Activated CD4-positive, alpha-beta memory T cell treated with anti-CD3 and anti-CD28 coated beads, Interleukin-2, amount 10 ng/mL, durations not matched to agents 7 days and 5 days (primary cell): ENCODE measurements at regions of chr6 and their contacts with region 1.

Region 1: GRCh38 chr6:391559-392440 is at the start of gene IRF4:
- DNase-seq: peak; percentile 76
- H3K4me3 Mint-ChIP-seq: peak within 1 kb of the TSS; percentile 98
- H3K27ac Mint-ChIP-seq: peak within 1 kb of the TSS; percentile 98
- H3K4me1 Mint-ChIP-seq: peaks cover 56% of the 10 kb centered on the region
- H3K27me3 Mint-ChIP-seq: no peaks in the 10 kb centered on the region
- total RNA-seq, gene IRF4: 171 to 178 TPM

Region 2: DNA sequence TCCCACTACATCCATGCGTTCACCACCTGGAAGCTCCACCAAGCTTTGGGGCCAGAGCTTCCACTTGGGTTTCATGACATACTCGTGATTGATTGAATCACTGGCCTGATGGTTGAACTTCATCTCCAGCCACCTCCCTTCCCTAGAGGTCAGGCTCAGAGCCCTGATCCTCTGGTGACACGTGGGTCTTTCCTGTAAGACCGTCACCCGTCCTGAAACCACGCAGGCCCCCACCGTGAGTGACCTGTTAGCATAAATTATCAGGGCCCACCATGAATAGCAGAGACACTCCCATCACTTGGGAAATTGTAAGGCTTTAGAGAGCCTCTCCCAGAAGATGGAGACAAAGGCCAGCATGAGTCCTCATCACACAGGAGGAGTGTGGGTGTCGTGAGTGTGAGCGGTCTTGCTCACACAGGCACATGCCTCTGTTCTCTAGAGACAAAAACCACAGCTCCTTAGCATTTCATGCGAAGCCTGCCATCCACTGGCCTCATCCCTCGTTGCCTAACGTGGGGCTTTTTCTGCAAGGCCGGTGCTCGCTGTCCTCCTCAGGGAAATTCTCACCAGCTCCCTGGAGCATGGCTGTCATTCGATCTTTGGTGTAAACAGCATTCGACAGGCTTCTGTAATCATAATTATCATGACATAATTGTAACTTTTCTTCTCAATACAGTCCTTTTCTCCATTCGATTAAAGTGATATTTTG is 164.6 kb before region 1 on chr6:
- CTCF ChIA-PET with region 1: interaction called, 3 read pairs
- POLR2A ChIA-PET with region 1: interaction called, 137 read pairs
- DNase-seq: no peak
- H3K4me3 Mint-ChIP-seq: no peak overlapping the region
- H3K27ac Mint-ChIP-seq: peak overlapping the region; percentile 91
- H3K4me1 Mint-ChIP-seq: peaks cover 77% of the 10 kb centered on the region
- H3K27me3 Mint-ChIP-seq: peaks cover 7% of the 10 kb centered on the region

Region 3: DNA sequence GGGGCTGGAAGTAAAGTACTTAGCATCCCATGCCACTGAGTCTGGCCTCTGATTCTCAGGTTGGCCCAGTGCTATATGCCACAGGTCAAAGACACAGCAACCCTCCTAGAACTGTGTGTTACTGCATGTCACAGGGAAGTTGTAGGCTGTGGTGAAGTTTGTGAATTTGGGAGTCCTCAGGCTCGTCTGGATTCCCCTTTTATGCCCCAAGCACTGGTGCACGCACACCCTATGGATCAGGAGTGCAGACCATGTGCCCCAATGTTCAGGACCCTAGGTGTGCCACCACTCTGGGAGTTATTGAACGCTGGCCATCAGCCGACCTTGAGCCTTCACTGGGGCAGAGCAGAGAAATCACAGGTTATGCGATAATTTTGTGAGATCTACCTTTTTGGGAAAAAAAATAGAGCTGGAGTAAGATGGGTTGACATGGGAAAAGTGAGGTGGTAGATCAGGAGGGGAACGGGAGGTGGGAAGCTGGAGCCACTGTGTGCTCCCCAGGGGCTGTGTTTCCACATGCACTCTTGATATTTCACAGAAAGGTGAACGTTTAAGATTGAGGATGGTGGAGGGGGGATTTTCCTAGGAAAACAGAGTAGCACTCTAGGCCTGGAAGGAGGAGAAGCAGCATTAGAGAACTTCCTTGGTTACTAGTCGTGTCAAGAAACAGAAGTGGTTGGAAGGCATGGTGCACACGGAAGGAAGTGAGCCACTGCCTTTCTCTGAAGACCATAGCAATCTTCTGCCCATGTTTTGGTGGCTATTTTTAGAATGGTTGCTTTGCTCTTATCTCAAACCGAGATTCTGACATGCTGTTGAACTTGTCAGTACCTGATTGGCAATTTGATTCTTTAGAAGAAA is 55.4 kb before region 1 on chr6:
- CTCF ChIA-PET with region 1: interaction called, 9 read pairs
- POLR2A ChIA-PET with region 1: interaction called, 21 read pairs
- DNase-seq: peak; percentile 29
- H3K4me3 Mint-ChIP-seq: no peak overlapping the region
- H3K27ac Mint-ChIP-seq: peak overlapping the region; percentile 71
- H3K4me1 Mint-ChIP-seq: peaks cover 55% of the 10 kb centered on the region
- H3K27me3 Mint-ChIP-seq: no peaks in the 10 kb centered on the region

Region 4: GRCh38 chr6:446418-447366 is 54.9 kb after region 1 on chr6:
- CTCF ChIA-PET with region 1: interaction called, 9 read pairs
- POLR2A ChIA-PET with region 1: interaction called, 110 read pairs
- DNase-seq: peak; percentile 92
- H3K4me3 Mint-ChIP-seq: peak overlapping the region; percentile 64
- H3K27ac Mint-ChIP-seq: peak overlapping the region; percentile 87
- H3K4me1 Mint-ChIP-seq: peaks cover 55% of the 10 kb centered on the region
- H3K27me3 Mint-ChIP-seq: peaks cover 12% of the 10 kb centered on the region

Region 5: DNA sequence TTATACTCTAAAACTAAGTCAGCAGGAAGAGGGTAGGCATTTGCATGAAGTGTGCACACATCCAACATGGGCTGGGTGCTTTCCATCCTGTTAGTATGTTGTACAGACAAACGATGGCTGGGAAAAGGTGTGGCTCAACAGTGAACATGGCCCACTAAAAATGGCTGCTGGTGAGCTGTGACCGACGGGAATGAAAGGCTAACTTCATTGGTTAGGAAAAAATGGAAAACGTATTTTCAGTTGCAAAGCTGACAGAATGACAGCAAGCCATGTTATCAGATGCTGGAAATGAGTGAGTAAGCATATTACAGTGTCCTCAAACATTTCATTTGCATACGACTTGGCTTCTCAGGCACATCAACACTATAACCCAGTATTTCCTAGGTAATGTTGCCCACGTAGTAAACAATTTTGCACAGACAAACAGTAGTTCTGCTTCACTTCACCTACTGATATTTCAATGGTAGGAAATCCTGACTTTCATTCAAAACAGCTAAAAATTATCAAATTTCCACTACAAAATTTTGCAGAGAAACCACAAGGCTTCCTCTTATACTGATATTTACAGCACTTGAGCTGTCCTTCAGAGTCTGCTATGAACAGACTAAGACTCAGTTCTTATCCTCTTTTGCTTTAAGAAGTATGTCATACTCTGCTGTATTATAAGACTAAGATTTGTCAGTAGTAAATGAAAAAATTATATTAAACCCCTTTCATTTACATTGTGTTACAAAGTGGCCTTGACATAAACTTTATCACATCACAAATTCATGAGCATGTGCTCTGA is 98.6 kb after region 1 on chr6:
- CTCF ChIA-PET with region 1: interaction called, 5 read pairs
- POLR2A ChIA-PET with region 1: interaction called, 74 read pairs
- DNase-seq: peak; percentile 42
- H3K4me3 Mint-ChIP-seq: peak overlapping the region; percentile 45
- H3K27ac Mint-ChIP-seq: peak overlapping the region; percentile 93
- H3K4me1 Mint-ChIP-seq: peaks cover 79% of the 10 kb centered on the region
- H3K27me3 Mint-ChIP-seq: no peaks in the 10 kb centered on the region

Region 6: GRCh38 chr6:582370-582769 is 190.6 kb after region 1 on chr6:
- CTCF ChIA-PET with region 1: no interaction called
- POLR2A ChIA-PET with region 1: interaction called, 14 read pairs
- DNase-seq: no peak
- H3K4me3 Mint-ChIP-seq: peak overlapping the region; percentile 48
- H3K27ac Mint-ChIP-seq: peak overlapping the region; percentile 47
- H3K4me1 Mint-ChIP-seq: peaks cover 45% of the 10 kb centered on the region
- H3K27me3 Mint-ChIP-seq: no peaks in the 10 kb centered on the region

Region 7: GRCh38 chr6:854406-855118 is 462.8 kb after region 1 on chr6:
- CTCF ChIA-PET with region 1: no interaction called
- POLR2A ChIA-PET with region 1: no interaction called
- DNase-seq: no peak
- H3K4me3 Mint-ChIP-seq: no peak overlapping the region
- H3K27ac Mint-ChIP-seq: no peak overlapping the region
- H3K4me1 Mint-ChIP-seq: no peaks in the 10 kb centered on the region
- H3K27me3 Mint-ChIP-seq: peaks cover 8% of the 10 kb centered on the region